Activated naive CD4-positive, alpha-beta T cell treated with anti-CD3 and anti-CD28 coated beads for 36 hours (primary cell): ENCODE measurements at regions of chr11 and their contacts with region 1.

Region 1: DNA sequence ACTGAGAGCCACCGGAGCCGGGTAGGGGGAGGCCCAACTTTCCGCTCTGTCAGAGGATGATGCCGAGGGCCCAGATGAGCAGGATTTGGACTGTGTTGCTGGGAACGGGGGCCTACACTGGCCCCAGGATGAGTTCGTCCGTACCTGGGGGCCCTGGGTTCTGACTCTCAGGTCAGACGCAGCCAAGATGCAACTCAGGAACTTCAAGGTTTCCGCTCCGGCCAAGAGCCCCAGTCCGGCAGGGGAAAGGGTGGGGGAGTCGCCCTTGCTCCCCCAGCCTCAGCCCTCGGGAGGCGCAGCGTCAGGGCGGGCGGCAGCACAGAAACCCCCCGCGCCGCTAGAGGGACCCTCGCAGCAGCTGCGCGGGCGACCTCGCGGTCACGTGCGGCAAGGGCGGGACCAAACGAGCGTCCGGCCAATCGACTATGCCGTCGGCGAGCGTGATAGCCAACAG is 241 bp upstream of the ARL2 start:
- DNase-seq: peak; percentile 87
- H3K4me3 Mint-ChIP-seq: peak overlapping the region; percentile 85
- H3K27ac Mint-ChIP-seq: peak overlapping the region; percentile 96
- H3K4me1 Mint-ChIP-seq: peaks cover 27% of the 10 kb centered on the region
- H3K27me3 Mint-ChIP-seq: no peaks in the 10 kb centered on the region

Region 2: GRCh38 chr11:64472593-64473455 is 540.9 kb before region 1 on chr11:
- CTCF ChIA-PET with region 1: no interaction called
- intact Hi-C with region 1: no loop called
- DNase-seq: no peak
- H3K4me3 Mint-ChIP-seq: no peak overlapping the region
- H3K27ac Mint-ChIP-seq: no peak overlapping the region
- H3K4me1 Mint-ChIP-seq: peaks cover 6% of the 10 kb centered on the region
- H3K27me3 Mint-ChIP-seq: peaks cover 6% of the 10 kb centered on the region

Region 3: GRCh38 chr11:64900263-64900678 is 113.4 kb before region 1 on chr11:
- CTCF ChIA-PET with region 1: no interaction called
- intact Hi-C with region 1: loop called (anchors 1 kb)
- DNase-seq: peak; percentile 86
- H3K4me3 Mint-ChIP-seq: no peak overlapping the region
- H3K27ac Mint-ChIP-seq: peak overlapping the region; percentile 69
- H3K4me1 Mint-ChIP-seq: peaks cover 22% of the 10 kb centered on the region
- H3K27me3 Mint-ChIP-seq: no peaks in the 10 kb centered on the region

Region 4: DNA sequence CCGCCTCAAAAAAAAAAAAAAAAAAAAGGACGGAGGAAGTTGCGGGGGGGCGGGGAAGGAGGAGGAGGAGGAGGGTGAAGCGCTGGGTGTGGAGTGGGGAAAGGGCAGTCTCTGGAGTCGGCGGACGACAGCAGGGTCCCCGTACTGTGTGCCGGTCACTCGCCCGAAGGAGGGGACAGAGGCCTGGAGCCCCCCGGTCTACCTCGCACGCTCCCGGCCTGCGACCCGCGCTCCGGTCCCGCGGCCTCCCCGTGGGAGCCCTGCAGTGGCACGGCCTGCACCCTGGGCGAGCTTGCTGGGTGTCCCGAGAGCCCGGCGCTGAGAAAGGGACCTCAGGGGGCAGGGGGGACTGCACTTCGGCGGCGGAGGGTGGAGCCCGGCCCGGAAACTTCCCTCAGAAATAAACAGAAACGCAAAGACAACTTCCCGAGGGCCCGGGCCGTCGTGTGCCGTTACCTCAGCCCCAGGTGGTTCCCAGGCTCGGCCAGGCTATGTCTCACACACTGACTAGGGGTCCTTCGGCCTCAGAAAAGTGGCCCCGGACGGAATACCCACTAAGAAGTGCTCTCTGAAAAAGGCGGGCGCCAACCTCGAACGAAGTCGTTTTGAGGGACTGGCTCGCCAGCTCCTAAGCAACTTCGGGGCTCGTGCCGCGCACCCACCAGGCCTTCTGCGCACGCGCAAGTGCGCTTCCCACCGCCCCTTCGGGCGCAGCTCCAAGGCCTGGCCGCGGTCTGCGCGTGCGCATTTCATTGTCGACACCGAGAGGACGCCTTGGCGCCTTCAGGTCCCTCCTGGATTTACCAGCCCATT is 42.1 kb before region 1 on chr11 and contains the start of gene MAJIN:
- CTCF ChIA-PET with region 1: no interaction called
- intact Hi-C with region 1: loop called (anchors 2 kb)
- DNase-seq: peak; percentile 89
- H3K4me3 Mint-ChIP-seq: peak within 1 kb of the TSS; percentile 69
- H3K27ac Mint-ChIP-seq: peak within 1 kb of the TSS; percentile 81
- H3K4me1 Mint-ChIP-seq: peaks cover 41% of the 10 kb centered on the region
- H3K27me3 Mint-ChIP-seq: no peaks in the 10 kb centered on the region
- total RNA-seq, gene MAJIN: 0.29 to 0.37 TPM

Region 5: GRCh38 chr11:65047581-65048422 is 34.1 kb after region 1 on chr11:
- CTCF ChIA-PET with region 1: no interaction called
- intact Hi-C with region 1: no loop called
- DNase-seq: peak; percentile 24
- H3K4me3 Mint-ChIP-seq: peak overlapping the region; percentile 70
- H3K27ac Mint-ChIP-seq: peak overlapping the region; percentile 18
- H3K4me1 Mint-ChIP-seq: peaks cover 23% of the 10 kb centered on the region
- H3K27me3 Mint-ChIP-seq: no peaks in the 10 kb centered on the region

Region 6: GRCh38 chr11:65078151-65078550 is 64.4 kb after region 1 on chr11:
- CTCF ChIA-PET with region 1: interaction called, 12 read pairs
- intact Hi-C with region 1: loop called (anchors 1 kb)
- DNase-seq: peak; percentile 71
- H3K4me3 Mint-ChIP-seq: no peak overlapping the region
- H3K27ac Mint-ChIP-seq: peak overlapping the region; percentile 39
- H3K4me1 Mint-ChIP-seq: peaks cover 43% of the 10 kb centered on the region
- H3K27me3 Mint-ChIP-seq: no peaks in the 10 kb centered on the region

Region 7: GRCh38 chr11:65180877-65181568 is 167.3 kb after region 1 on chr11:
- CTCF ChIA-PET with region 1: interaction called, 3 read pairs
- intact Hi-C with region 1: loop called (anchors 1 kb)
- DNase-seq: peak; percentile 59
- H3K4me3 Mint-ChIP-seq: peak overlapping the region; percentile 80
- H3K27ac Mint-ChIP-seq: no peak overlapping the region
- H3K4me1 Mint-ChIP-seq: peaks cover 15% of the 10 kb centered on the region
- H3K27me3 Mint-ChIP-seq: no peaks in the 10 kb centered on the region